ENCODE measurements at regions of chr3 and their contacts with region 1.

Region 1: GRCh38 chr3:170357176-170357919 is at the start of gene SKIL:
- DNase-seq: peak; percentile 97 to 99
- H3K4me3 ChIP-seq: peak within 1 kb of the TSS; percentile 91 to 98
- H3K27ac ChIP-seq: peak within 1 kb of the TSS; percentile 98 to 100
- H3K4me1 ChIP-seq: peaks cover 11 to 21% of the 10 kb centered on the region in 2 donors
- H3K27me3 ChIP-seq: no peaks in the 10 kb centered on the region
- CTCF ChIP-seq: peak in 1 of 3 experiments; percentile 46
- total RNA-seq, gene SKIL: 30.2 TPM

Region 2: DNA sequence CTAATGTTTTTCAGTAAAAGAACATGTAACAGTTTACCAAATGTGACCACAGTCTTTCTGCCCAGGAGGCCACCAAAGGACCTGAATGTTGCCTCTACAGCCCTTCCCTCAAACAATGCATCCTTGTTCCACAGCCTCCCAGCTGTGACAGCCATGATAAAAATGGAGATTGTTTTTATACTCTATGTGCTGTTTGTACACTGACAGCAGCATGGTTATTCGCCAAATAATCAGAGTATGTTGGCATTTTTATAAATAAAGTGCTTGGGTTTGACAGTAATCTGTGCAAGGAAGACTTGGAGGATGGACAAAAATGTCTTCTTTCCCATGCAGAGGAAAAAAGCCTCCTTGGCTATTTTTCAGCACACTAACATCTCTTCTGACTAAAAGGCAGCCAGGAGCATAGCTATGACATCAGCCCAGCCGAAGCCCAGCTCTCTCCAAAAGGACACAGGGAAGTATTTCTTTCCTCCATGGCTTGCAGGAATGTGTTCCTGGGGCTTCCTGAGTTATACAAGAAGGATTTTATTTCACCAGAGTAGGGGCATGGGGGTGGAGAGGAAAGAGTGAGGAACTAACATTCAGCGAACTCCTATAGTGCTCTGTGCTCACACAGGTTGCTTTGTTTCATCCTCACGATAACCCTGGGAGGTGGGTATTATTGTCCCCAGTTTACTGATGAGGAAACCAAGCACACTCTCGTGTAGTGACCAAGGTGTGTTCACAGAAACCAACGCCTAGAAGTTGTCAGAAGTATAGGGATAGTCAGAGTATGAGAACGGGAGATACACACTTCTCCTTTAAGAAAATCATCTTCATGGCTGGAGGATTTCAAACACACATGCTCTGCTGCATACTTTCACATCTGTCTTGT is 1033.5 kb before region 1 on chr3:
- intact Hi-C with region 1: loop called (anchors 10 kb)
- DNase-seq: peak in 1 of 2 donors; percentile 75
- H3K4me3 ChIP-seq: peak overlapping the region in 1 of 2 donors; percentile 9
- H3K27ac ChIP-seq: peak overlapping the region; percentile 54 to 56
- H3K4me1 ChIP-seq: peaks cover 0 to 10% of the 10 kb centered on the region in 2 donors
- H3K27me3 ChIP-seq: no peaks in the 10 kb centered on the region
- CTCF ChIP-seq: no peak

Region 3: GRCh38 chr3:169764452-169765274 is 592.7 kb before region 1 on chr3 and contains the start of gene TERC:
- intact Hi-C with region 1: loop called (anchors 2 kb)
- DNase-seq: peak; percentile 77 to 98
- H3K4me3 ChIP-seq: peak within 1 kb of the TSS; percentile 75 to 83
- H3K27ac ChIP-seq: peak within 1 kb of the TSS; percentile 96 to 97
- H3K4me1 ChIP-seq: peaks cover 3 to 8% of the 10 kb centered on the region in 2 donors
- H3K27me3 ChIP-seq: no peaks in the 10 kb centered on the region
- CTCF ChIP-seq: no peak
- total RNA-seq, gene TERC: 260 TPM

Region 4: GRCh38 chr3:169966428-169966950 is 390.9 kb before region 1 on chr3 and contains the start of gene SEC62:
- intact Hi-C with region 1: loop called (anchors 2 kb)
- DNase-seq: peak; percentile 73 to 96
- H3K4me3 ChIP-seq: peak within 1 kb of the TSS; percentile 79 to 89
- H3K27ac ChIP-seq: peak within 1 kb of the TSS; percentile 86 to 93
- H3K4me1 ChIP-seq: peaks cover 4 to 12% of the 10 kb centered on the region in 2 donors
- H3K27me3 ChIP-seq: no peaks in the 10 kb centered on the region
- CTCF ChIP-seq: peak in 2 of 3 experiments; percentile 33 to 38
- total RNA-seq, gene SEC62: 20.5 TPM

Region 5: GRCh38 chr3:170221924-170222646 is 135.3 kb before region 1 on chr3 and contains the start of gene PRKCI:
- intact Hi-C with region 1: loop called (anchors 1 kb)
- DNase-seq: peak; percentile 80 to 97
- H3K4me3 ChIP-seq: peak within 1 kb of the TSS; percentile 96 to 97
- H3K27ac ChIP-seq: peak within 1 kb of the TSS; percentile 94 to 96
- H3K4me1 ChIP-seq: peaks cover 0 to 17% of the 10 kb centered on the region in 2 donors
- H3K27me3 ChIP-seq: no peaks in the 10 kb centered on the region
- CTCF ChIP-seq: no peak
- total RNA-seq, gene PRKCI: 20.3 TPM

Region 6: GRCh38 chr3:170740726-170741591 is 383.6 kb after region 1 on chr3:
- intact Hi-C with region 1: loop called (anchors 2 kb)
- DNase-seq: peak in 1 of 2 donors; percentile 75
- H3K4me3 ChIP-seq: peak overlapping the region in 1 of 2 donors; percentile 34
- H3K27ac ChIP-seq: peak overlapping the region; percentile 78 to 83
- H3K4me1 ChIP-seq: peaks cover 0 to 22% of the 10 kb centered on the region in 2 donors
- H3K27me3 ChIP-seq: no peaks in the 10 kb centered on the region
- CTCF ChIP-seq: no peak

Region 7: DNA sequence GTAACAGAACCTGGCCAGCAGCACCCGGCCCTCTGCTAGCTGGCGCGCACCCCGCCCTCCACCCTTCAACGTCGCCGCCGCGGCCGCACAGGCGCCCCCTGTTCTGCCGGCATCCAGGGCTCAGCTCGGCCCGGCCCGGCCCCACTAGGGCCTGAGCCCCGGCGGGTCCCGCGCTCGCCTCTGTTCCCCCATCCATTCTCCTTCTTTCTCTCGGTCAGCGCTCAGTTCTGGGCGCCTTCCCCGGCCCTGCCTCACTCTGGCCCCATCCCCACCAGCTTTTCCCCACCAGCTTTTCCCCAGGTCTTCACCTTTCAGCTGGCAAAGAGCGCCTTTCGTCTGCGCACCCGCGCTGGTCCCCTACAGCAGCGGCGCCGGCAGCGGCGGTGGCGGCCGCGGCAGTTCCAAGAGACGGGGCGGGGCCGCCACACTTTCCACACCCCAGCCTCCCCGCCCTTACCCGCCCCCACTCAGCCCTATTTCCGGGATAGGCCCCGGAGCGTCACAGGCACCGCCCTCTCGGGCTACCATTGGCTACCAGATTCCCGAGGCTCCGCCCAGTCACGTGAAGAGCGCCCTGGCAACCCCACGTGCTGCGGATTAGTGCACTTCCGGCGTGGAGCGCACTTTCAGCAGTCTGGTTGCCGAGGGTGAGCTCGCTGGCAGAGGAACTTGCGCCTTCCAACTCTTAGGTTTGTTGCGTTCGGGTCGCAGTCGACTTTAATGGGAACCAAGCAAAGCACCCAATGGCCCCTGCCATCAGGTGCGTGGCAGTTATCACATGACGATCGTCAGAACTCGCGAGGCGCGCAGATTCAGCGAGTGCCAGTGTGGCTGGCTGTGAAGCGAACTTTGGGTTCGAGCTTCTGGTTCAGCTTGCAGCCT is 551.1 kb after region 1 on chr3 and contains the start of gene EIF5A2:
- intact Hi-C with region 1: loop called (anchors 1 kb)
- DNase-seq: peak; percentile 85 to 97
- H3K4me3 ChIP-seq: peak within 1 kb of the TSS; percentile 86 to 95
- H3K27ac ChIP-seq: peak within 1 kb of the TSS; percentile 79 to 85
- H3K4me1 ChIP-seq: peaks cover 0 to 6% of the 10 kb centered on the region in 2 donors
- H3K27me3 ChIP-seq: no peaks in the 10 kb centered on the region
- CTCF ChIP-seq: peak in 1 of 3 experiments; percentile 8
- total RNA-seq, gene EIF5A2: 28.6 TPM

Measured in ascending aorta (tissue), 2 donors.